Left colon (tissue), 2 donors: ENCODE measurements at regions of chr9 and their contacts with region 1.

Region 1: DNA sequence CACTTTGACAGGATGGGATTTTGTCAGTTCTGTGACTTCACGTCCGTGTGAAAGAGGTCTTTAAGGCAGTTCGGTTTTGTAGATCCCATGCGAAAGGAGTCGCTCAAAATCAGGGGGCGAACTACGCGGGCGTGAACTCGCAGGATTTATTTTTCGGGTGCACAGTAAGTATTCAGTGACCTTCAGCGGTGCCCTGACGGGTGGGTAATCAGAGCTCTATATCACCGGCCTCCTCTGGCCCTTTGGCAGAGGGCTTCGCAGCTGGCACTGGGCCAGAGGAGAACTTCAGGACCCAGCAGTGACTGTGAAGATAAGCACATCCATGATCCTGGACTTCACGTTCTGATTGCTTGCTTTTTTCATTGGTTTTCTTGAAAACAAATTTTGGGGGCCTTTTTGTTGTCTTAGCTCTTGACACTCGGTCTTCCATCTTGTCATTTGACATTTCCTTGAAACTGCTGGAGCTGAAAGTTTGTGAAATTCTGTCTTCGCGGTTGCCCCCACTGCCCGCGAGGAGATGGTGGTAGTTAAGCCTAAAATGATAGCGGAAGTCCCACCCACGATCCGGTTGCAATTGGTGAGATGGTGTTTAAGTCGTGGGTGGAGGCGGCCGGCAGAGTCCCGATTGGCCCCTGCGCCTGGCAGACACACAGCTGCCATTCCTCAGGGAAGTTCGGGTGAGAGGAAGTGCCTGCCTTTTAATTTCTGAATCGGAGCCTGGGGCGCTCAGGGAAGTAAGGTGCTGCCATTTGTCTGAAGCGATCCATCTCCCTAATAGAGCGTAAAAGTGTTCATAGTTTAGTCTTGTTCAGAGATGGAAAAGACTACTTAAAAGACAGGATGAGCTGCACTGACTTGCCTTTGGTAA is at the start of gene FAM120AOS:
- DNase-seq: peak; percentile 92 to 95
- ATAC-seq: peak; percentile 70
- total RNA-seq, gene FAM120AOS: 65.8 to 93.3 TPM

Region 2: GRCh38 chr9:93501406-93501805 is 48.1 kb after region 1 on chr9:
- intact Hi-C with region 1: loop called in 1 of 2 experiments (anchors 10 kb)
- DNase-seq: no peak
- ATAC-seq: peak; percentile 30

Region 3: GRCh38 chr9:93566408-93567270 is 113.4 kb after region 1 on chr9:
- intact Hi-C with region 1: loop called in 1 of 2 experiments (anchors 5 kb)
- DNase-seq: peak; percentile 96 to 99
- ATAC-seq: peak; percentile 96

Region 4: GRCh38 chr9:94084314-94084713 is 631.0 kb after region 1 on chr9 and contains the start of gene PTPDC1:
- intact Hi-C with region 1: no loop called
- DNase-seq: no peak
- ATAC-seq: no peak
- total RNA-seq, gene PTPDC1: 6.5 to 6.6 TPM